RWPE1 (cell line): ENCODE measurements at regions of chr10 and their contacts with region 1.

Region 1: GRCh38 chr10:73517271-73517877 is 21.6 kb upstream of the PPP3CB start:
- DNase-seq: peak; percentile 41
- H3K27ac ChIP-seq: no peak overlapping the region
- CTCF ChIP-seq: no peak

Region 2: GRCh38 chr10:71521504-71522441 is 1995.6 kb before region 1 on chr10:
- CTCF ChIA-PET with region 1: no interaction called
- POLR2A ChIA-PET with region 1: interaction called, 10 read pairs
- DNase-seq: no peak
- H3K27ac ChIP-seq: no peak overlapping the region
- CTCF ChIP-seq: no peak

Region 3: DNA sequence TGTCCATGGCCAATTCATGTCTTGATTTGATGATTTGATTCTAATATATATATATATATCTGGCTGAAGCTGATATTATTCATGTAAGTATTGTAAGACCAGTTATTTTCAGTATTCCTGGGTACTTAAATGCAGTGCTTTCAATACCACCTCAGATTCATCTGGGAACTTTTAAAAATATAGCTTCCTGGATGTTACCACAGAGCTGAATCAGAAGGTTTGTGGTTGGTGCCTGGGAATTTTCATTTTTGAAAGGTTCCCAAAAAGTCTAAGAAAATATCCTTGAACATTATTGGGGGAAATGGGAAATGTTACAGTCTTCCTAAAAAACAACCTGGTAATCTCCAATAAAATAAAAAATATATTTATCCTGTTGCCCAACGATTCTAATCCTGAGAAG is 10.9 kb before region 1 on chr10:
- CTCF ChIA-PET with region 1: no interaction called
- POLR2A ChIA-PET with region 1: no interaction called
- DNase-seq: no peak
- H3K27ac ChIP-seq: no peak overlapping the region
- CTCF ChIP-seq: no peak

Region 4: DNA sequence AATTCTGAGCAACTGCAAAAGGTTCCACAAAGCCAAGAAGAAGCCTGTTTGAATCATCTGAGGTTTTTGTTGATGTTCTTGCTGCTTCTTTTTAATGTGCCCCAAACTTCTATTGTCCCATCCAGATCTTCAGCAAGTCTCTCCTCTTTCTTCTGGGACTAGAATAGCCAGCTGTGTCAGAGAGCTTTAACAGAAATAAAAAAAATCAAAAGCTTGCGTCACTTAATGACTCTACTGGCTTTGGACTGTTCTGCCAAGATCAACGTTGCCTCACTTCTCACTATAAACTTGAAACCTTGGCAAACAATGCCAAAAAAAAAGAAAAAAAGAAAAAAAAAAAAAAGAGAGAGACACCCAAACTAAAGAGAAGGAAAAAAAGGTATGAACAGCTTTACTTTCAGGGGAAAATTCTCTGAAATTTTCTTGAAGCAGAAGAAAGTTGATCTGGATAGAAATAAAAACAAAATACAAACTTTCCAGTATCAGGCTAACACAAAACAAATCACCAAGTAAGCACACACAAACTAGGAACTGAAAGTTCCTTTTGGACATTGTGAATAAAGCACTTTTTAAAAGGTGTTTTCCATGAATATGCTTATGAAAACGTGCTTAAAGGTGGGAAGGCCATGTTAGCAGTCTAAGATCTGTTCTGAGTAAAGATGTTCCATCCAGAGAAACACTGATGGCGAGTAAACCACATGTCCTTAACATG is 59.0 kb after region 1 on chr10:
- CTCF ChIA-PET with region 1: no interaction called
- POLR2A ChIA-PET with region 1: no interaction called
- DNase-seq: no peak
- H3K27ac ChIP-seq: no peak overlapping the region
- CTCF ChIP-seq: no peak